Ascending aorta (tissue), 2 donors: ENCODE measurements at regions of chr17 and their contacts with region 1.

Region 1: DNA sequence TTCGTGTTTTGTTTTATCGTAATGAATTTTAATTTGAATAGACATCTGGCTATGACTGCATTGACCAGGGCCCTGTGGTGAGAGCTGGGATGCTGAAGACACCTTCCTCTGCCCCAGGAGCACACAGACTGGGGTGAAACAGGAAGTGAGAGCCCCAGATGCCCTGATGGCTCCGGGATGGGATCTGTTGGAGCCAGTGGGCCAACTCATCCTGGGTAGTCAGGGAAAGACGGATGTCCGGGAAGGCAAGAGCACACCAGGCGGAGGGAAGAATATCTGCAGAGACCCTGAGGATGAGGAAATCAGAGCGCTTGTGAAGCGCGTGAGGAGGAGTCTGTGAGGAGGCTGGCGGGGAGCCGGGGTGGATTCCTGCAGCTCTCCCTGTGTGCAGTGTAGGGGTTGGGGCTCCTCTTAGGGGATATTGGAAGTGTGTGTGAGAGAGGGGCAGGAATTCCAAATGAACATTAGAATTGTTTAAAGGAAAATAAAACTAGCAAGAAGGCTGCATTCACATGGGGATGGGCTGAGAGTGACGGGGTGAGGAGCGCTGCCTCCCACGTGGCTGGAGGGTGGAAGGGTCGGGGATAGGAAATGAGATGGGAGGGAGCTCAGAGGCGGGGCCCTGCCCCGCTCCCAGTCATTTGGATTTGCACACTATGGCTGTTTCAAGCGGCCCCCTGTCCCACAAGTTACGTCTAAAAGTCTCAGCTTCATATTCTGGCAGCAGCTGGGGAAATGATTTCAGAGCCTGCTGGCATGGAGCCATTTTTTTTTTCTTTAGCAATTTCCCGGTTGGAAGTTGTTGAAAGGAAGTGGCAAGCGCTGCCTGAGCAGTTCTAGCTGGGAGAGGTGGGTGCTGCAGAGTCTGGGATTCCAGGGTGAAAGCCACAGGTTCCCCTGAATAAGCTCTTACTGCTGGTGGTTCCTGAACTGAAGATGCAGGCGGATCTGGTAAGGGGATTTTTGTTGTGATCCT is 71.2 kb upstream of the LGALS9 start:
- DNase-seq: peak in 1 of 2 donors; percentile 76
- H3K4me3 ChIP-seq: peak overlapping the region in 1 of 2 donors; percentile 28
- H3K27ac ChIP-seq: peak overlapping the region; percentile 31 to 53
- H3K4me1 ChIP-seq: peaks cover 0 to 6% of the 10 kb centered on the region in 2 donors
- H3K27me3 ChIP-seq: no peaks in the 10 kb centered on the region
- CTCF ChIP-seq: no peak

Region 2: GRCh38 chr17:27494192-27495091 is 65.4 kb before region 1 on chr17:
- intact Hi-C with region 1: loop called (anchors 2 kb)
- DNase-seq: peak; percentile 58 to 91
- H3K4me3 ChIP-seq: peak overlapping the region; percentile 16 to 47
- H3K27ac ChIP-seq: peak overlapping the region; percentile 65 to 69
- H3K4me1 ChIP-seq: peaks cover 0 to 12% of the 10 kb centered on the region in 2 donors
- H3K27me3 ChIP-seq: no peaks in the 10 kb centered on the region
- CTCF ChIP-seq: peak in 2 of 3 experiments; percentile 27 to 62

Region 3: GRCh38 chr17:27635275-27635823 is 75.6 kb after region 1 on chr17:
- intact Hi-C with region 1: no loop called
- DNase-seq: no peak
- H3K4me3 ChIP-seq: no peak overlapping the region
- H3K27ac ChIP-seq: no peak overlapping the region
- H3K4me1 ChIP-seq: peaks cover 2 to 12% of the 10 kb centered on the region in 2 donors
- H3K27me3 ChIP-seq: no peaks in the 10 kb centered on the region
- CTCF ChIP-seq: no peak